PC-3 (cell line): ENCODE measurements at regions of chr15 and their contacts with region 1.

Region 1: GRCh38 chr15:75215107-75216004 is 13.7 kb downstream of the C15orf39 start:
- DNase-seq: no peak
- ATAC-seq: peak; percentile 37; the same call in 1 of the 2 replicates
- H3K4me3 ChIP-seq: no peak overlapping the region
- H3K27ac ChIP-seq: no peak overlapping the region
- H3K4me1 ChIP-seq: no peaks in the 10 kb centered on the region
- H3K27me3 ChIP-seq: no peaks in the 10 kb centered on the region
- CTCF ChIP-seq: no peak

Region 2: DNA sequence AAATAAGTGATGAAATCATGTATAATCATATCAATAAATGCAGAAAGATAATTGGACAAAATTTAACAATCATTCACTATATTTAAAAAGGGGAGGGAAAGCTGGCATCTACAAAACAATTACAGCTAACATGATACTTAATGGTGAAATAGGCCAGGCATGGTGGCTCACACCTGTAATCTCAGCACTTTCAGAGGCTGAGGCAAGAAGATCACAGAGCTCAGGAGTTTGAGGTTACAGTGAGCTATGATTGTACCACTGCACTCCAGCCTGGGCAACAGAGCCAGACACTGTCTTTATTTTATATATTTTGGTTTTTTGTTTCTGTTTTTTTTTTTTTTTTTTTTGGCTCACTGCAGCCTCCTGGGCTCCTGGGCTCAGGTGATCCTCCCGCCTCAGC is 531.6 kb before region 1 on chr15:
- CTCF ChIA-PET with region 1: no interaction called
- POLR2A ChIA-PET with region 1: interaction called, 28 read pairs
- intact Hi-C with region 1: no loop called
- DNase-seq: no peak
- ATAC-seq: no peak
- H3K4me3 ChIP-seq: no peak overlapping the region
- H3K27ac ChIP-seq: no peak overlapping the region
- H3K4me1 ChIP-seq: no peaks in the 10 kb centered on the region
- H3K27me3 ChIP-seq: no peaks in the 10 kb centered on the region
- CTCF ChIP-seq: no peak

Region 3: DNA sequence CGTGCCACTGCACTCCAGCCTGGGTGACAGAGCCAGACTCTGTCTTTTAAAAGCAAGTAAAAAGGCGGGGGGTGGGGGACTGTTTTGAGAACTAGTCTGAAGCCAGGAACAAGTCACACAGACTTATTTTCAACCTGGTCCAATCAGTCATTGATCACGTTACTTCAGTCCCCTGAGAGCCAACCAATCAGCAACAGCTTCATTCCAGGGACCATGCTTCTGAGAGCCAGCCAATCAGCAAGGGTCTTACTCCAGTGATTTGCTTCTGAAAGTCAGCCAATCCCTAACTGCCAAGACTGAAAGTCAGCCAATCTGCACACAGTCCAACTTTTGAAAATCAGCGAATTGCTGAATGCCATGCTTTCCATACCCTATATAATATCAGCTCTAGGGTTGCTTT is 62.3 kb before region 1 on chr15:
- CTCF ChIA-PET with region 1: no interaction called
- POLR2A ChIA-PET with region 1: no interaction called
- intact Hi-C with region 1: no loop called
- DNase-seq: peak; percentile 55
- ATAC-seq: no peak
- H3K4me3 ChIP-seq: no peak overlapping the region
- H3K27ac ChIP-seq: no peak overlapping the region
- H3K4me1 ChIP-seq: peaks cover 13% of the 10 kb centered on the region
- H3K27me3 ChIP-seq: no peaks in the 10 kb centered on the region
- CTCF ChIP-seq: no peak

Region 4: DNA sequence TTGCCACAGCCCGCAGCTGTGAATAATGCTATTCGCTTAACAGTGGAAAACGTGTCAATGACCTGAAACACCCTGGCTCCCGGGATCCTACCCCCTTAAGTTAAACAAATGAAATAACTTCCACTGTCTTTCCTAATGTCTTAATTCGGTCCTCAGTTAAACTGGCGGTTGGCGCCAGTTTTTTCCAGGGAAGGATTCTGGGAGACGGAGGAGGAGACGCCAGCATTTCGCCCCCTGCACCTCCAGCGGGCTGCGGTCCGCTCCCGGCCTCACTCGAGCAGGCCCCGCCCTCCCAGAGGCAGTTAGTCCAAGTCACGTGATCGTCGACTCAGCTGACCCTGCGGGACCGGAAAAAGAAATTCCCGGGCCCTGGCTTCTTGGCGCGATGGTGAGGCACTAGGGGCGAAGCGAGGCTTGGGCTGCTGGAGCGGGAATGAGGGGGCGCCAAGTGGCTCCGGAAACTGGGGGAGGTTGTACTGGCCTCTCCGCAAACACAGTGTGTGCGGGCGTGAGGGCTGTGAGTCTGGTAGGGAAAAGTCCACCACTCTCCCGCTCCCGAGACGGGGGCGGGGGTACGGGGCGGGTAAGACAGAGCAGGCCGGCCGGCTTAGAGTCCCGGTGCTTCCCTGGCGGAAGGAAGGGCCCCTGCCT is 120.5 kb after region 1 on chr15 and contains the start of gene COMMD4:
- CTCF ChIA-PET with region 1: no interaction called
- POLR2A ChIA-PET with region 1: no interaction called
- intact Hi-C with region 1: no loop called
- DNase-seq: peak; percentile 96
- ATAC-seq: peak; percentile 96
- H3K4me3 ChIP-seq: peak within 1 kb of the TSS; percentile 73
- H3K27ac ChIP-seq: 0 out of 2 replicates have a peak within 1 kb of the TSS, but pooled peaks have one; percentile 2
- H3K4me1 ChIP-seq: peaks cover 16% of the 10 kb centered on the region
- H3K27me3 ChIP-seq: no peaks in the 10 kb centered on the region
- CTCF ChIP-seq: no peak
- total RNA-seq, gene COMMD4: 116 and 125 TPM in 2 replicates